Panc1 (cell line): ENCODE measurements at regions of chr3 and their contacts with region 1.

Region 1: GRCh38 chr3:15645736-15646501 is 44.4 kb downstream of the BTD start:
- DNase-seq: peak; percentile 63
- ATAC-seq: peak; percentile 89
- H3K4me3 ChIP-seq: peak overlapping the region in 1 of 2 experiments; percentile 30; a peak in 2 of 4 replicates
- H3K27ac ChIP-seq: peak overlapping the region; percentile 94
- H3K4me1 ChIP-seq: peaks cover 27% of the 10 kb centered on the region
- H3K27me3 ChIP-seq: no peaks in the 10 kb centered on the region
- CTCF ChIP-seq: no peak

Region 2: DNA sequence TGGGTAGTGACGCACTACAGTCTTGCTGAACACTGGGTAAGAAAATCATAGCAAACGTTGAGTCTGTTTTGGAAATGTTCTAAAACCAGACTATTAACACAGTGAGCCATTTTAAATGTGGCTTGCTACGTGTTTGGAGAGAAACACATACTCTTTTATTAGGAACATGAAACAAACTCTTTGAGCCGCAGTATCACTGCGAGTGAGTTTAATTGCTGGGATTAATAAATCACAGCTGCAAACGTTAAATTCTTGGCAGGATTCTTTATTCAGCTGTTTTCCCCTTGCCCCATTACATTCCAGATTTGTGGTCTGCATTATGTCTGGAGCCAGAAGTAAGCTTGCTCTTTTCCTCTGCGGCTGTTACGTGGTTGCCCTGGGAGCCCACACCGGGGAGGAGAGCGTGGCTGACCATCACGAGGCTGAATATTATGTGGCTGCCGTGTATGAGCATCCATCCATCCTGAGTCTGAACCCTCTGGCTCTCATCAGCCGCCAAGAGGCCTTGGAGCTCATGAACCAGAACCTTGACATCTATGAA is 10.7 kb before region 1 on chr3:
- CTCF ChIA-PET with region 1: no interaction called
- POLR2A ChIA-PET with region 1: interaction called, 14 read pairs
- in situ Hi-C with region 1: no loop called
- intact Hi-C with region 1: no loop called
- DNase-seq: no peak
- ATAC-seq: no peak
- H3K4me3 ChIP-seq: no peak overlapping the region
- H3K27ac ChIP-seq: peak overlapping the region; percentile 99
- H3K4me1 ChIP-seq: peaks cover 69% of the 10 kb centered on the region
- H3K27me3 ChIP-seq: no peaks in the 10 kb centered on the region
- CTCF ChIP-seq: no peak

Region 3: DNA sequence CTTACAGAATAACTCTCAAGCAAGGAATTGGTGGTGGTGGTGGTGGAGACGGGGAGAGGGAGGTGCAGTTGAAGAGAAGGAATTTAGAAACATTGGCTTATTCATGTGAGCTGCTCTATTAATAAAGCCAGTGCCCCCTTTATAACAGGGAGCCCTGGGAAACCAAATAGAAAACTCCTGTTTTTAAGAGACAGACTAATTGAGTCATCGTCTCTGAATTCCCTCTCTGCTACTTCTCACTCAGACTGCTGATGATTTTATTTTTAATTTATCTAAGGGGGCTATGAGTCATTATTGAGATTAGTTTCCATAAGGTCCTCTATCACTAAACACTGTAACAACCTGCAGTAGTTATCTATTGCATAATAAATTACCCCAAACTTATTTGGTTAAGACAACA is 382.7 kb after region 1 on chr3:
- CTCF ChIA-PET with region 1: no interaction called
- POLR2A ChIA-PET with region 1: no interaction called
- in situ Hi-C with region 1: no loop called
- intact Hi-C with region 1: no loop called
- DNase-seq: no peak
- ATAC-seq: no peak
- H3K4me3 ChIP-seq: no peak overlapping the region
- H3K27ac ChIP-seq: no peak overlapping the region
- H3K4me1 ChIP-seq: no peaks in the 10 kb centered on the region
- H3K27me3 ChIP-seq: no peaks in the 10 kb centered on the region
- CTCF ChIP-seq: no peak